ENCODE measurements at regions of chr6 and their contacts with region 1.

Region 1: GRCh38 chr6:132780770-132781371 is 17.6 kb downstream of the SLC18B1 start:
- DNase-seq: peak in 2 of 3 donors; percentile 53
- H3K4me3 ChIP-seq: no peak overlapping the region
- H3K27ac ChIP-seq: no peak overlapping the region
- H3K4me1 ChIP-seq: no peaks in the 10 kb centered on the region
- H3K27me3 ChIP-seq: no peaks in the 10 kb centered on the region

Region 2: DNA sequence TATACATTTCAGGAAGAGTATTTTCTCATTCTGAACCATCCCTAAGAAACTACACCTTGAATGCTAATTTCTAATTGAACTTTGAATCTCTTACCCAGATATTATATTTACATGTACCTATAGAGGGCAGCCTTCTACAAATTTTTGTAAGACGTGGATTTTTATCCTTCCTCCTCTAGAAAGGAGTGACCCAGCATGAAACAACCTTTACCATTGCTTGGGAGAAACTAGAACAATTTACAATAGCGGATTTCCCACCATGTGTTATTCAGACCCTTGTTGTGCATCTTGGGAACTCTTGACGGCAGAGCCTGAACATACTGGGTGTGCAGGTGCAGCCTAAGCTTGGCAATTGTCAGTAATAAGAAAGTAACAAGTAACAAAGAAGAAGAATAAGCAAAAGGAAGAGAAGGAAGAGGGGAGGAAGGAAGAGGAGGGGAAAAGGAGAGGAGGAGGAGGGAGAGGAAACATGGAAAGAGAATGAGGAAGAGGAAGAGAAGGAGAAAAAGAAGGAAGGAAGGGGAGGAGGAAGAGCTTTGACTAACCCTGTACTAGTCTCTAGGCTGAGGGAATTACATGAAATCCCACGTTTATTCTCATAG is 111.1 kb before region 1 on chr6:
- CTCF ChIA-PET with region 1: interaction called, 11 read pairs
- POLR2A ChIA-PET with region 1: no interaction called
- DNase-seq: peak; percentile 50 to 71 (median 68)
- H3K4me3 ChIP-seq: peak overlapping the region in 3 of 7 experiments; percentile 33 to 54 (median 42)
- H3K27ac ChIP-seq: no peak overlapping the region
- H3K4me1 ChIP-seq: peaks cover 0 to 4% (median 3%) of the 10 kb centered on the region in 4 experiments
- H3K27me3 ChIP-seq: no peaks in the 10 kb centered on the region

Region 3: DNA sequence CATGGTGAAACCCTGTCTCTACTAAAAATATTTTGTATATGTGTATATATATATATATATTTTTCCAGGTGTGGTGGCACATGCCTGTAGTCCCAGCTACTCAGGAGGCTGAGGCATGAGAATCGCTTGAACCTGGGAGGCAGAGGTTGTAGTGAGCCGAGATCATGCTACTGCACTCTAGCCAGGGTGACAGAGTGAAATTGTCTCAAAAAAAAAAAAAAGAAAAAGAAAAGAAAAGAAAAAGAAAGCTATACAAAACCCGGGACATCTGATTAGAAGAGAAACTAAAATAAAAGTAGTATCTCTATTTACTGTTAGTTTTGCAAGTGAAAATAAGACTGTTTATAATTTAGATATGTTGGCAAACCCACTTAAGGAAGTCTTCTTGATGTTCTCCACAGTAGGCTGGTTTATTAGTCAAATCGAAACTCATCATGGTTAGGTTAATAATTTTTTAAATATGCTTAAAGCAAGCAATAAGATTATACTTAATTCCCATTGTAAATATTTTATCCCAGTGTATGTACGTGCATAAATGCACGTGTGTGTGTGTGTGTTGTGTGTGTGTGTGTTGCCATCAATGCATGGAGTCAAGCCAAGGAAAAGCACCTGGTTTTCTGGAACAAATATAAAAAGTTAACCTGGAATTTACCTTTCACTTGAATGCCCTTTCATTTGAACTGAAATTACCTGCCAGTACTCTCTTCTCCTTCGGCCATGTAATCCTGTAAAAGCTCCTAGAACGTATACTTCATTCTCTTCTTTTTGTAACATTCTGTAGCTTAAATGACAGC is 30.2 kb before region 1 on chr6:
- CTCF ChIA-PET with region 1: no interaction called
- POLR2A ChIA-PET with region 1: no interaction called
- DNase-seq: no peak
- H3K4me3 ChIP-seq: no peak overlapping the region
- H3K27ac ChIP-seq: no peak overlapping the region
- H3K4me1 ChIP-seq: peaks cover 0 to 3% (median 0%) of the 10 kb centered on the region in 4 experiments
- H3K27me3 ChIP-seq: no peaks in the 10 kb centered on the region

Region 4: DNA sequence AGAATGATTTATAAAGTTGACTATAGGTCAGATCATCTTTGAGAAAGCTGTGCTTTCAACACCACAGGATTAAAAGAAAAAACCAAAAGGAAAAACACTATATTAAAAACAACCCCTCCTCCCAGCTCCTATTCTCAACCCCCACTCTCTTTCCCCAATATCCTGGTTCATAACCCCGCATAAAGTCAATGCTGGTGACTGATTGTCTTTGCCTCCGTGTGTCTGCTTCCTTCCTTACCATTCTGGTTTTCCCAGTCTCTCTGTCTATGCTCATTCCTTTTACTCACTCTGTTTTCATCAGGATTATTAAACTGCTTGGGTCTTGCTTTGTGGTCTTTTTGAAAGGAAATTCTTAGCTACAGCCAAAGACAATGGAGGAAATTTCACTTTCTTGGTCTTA is 69.4 kb after region 1 on chr6:
- CTCF ChIA-PET with region 1: no interaction called
- POLR2A ChIA-PET with region 1: no interaction called
- DNase-seq: no peak
- H3K4me3 ChIP-seq: no peak overlapping the region
- H3K27ac ChIP-seq: no peak overlapping the region
- H3K4me1 ChIP-seq: no peaks in the 10 kb centered on the region
- H3K27me3 ChIP-seq: no peaks in the 10 kb centered on the region

Region 5: GRCh38 chr6:132937466-132937906 is 156.6 kb after region 1 on chr6:
- CTCF ChIA-PET with region 1: no interaction called
- POLR2A ChIA-PET with region 1: no interaction called
- DNase-seq: peak; percentile 15 to 51 (median 39)
- H3K4me3 ChIP-seq: no peak overlapping the region
- H3K27ac ChIP-seq: no peak overlapping the region
- H3K4me1 ChIP-seq: no peaks in the 10 kb centered on the region
- H3K27me3 ChIP-seq: peaks cover 0 to 10% (median 5%) of the 10 kb centered on the region in 5 experiments

Measured in common myeloid progenitor, CD34-positive (primary cell).